WTC11 (cell line): ENCODE measurements at regions of chr3 and their contacts with region 1.

Region 1: GRCh38 chr3:138941259-138941885 is 5.6 kb downstream of the FOXL2 start:
- DNase-seq: peak; percentile 85
- ATAC-seq: peak; percentile 4
- H3K4me3 Mint-ChIP-seq: no peak overlapping the region
- H3K27ac Mint-ChIP-seq: no peak overlapping the region
- H3K4me1 Mint-ChIP-seq: peaks cover 59% of the 10 kb centered on the region
- H3K27me3 Mint-ChIP-seq: peaks cover 98% of the 10 kb centered on the region
- CTCF ChIP-seq: peak; percentile 71

Region 2: GRCh38 chr3:138509586-138509985 is 431.8 kb before region 1 on chr3:
- CTCF ChIA-PET with region 1: no interaction called
- POLR2A ChIA-PET with region 1: no interaction called
- DNase-seq: no peak
- ATAC-seq: no peak
- H3K4me3 Mint-ChIP-seq: no peak overlapping the region
- H3K27ac Mint-ChIP-seq: peak overlapping the region; percentile 10; the same call in 1 of the 2 replicates
- H3K4me1 Mint-ChIP-seq: peaks cover 10% of the 10 kb centered on the region
- H3K27me3 Mint-ChIP-seq: no peaks in the 10 kb centered on the region
- CTCF ChIP-seq: no peak

Region 3: DNA sequence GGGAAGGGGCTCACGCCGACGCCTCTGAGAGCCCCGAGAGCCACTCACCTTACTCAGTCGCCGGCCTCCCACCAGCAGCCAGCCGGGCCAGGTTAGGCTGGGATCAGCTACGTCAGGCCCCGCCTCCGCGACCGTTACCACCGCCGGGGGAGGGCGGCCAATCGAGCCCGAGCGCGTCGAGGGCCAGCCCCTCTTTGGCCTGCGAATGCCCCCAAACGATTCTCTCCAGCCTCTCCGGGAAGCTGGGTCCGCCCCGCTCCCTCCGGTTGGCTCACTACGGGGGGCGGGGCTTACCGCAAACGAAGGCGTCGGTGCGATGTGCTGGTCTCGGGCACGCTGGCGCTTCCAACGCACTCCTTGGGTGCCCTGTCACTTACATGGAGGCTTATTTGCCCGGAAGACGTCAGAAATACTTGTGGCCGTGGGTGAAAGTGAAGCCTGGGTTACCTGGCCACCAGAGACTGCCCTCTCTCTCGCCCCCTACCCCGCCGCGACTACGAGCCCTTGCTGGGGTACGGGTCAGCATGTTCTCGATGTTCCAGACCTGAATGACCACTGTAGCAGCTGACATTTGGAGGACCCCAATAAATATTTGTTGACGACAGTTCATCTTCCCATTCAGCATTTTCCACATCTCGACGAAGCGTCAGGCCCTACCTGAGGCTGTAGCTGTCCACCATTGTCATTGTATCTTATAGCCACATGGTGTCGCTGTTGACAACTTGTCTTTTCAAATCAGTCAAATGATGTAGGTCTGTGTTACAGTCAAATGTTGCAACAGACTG is 347.0 kb before region 1 on chr3 and contains the start of gene CEP70:
- CTCF ChIA-PET with region 1: interaction called, 37 read pairs
- POLR2A ChIA-PET with region 1: interaction called, 3 read pairs
- DNase-seq: peak; percentile 95
- ATAC-seq: peak; percentile 93
- H3K4me3 Mint-ChIP-seq: peak within 1 kb of the TSS; percentile 96
- H3K27ac Mint-ChIP-seq: peak within 1 kb of the TSS; percentile 95
- H3K4me1 Mint-ChIP-seq: peaks cover 21% of the 10 kb centered on the region
- H3K27me3 Mint-ChIP-seq: no peaks in the 10 kb centered on the region
- CTCF ChIP-seq: peak; percentile 86
- total RNA-seq, gene CEP70: 27.2 to 34.8 TPM (median 33.5 TPM) in 3 replicates

Region 4: GRCh38 chr3:138898301-138898700 is 43.1 kb before region 1 on chr3:
- CTCF ChIA-PET with region 1: no interaction called
- POLR2A ChIA-PET with region 1: no interaction called
- DNase-seq: no peak
- ATAC-seq: no peak
- H3K4me3 Mint-ChIP-seq: no peak overlapping the region
- H3K27ac Mint-ChIP-seq: no peak overlapping the region
- H3K4me1 Mint-ChIP-seq: no peaks in the 10 kb centered on the region
- H3K27me3 Mint-ChIP-seq: no peaks in the 10 kb centered on the region; the same call in 1 of the 2 replicates
- CTCF ChIP-seq: no peak

Region 5: GRCh38 chr3:138960417-138960852 is 19.1 kb after region 1 on chr3:
- CTCF ChIA-PET with region 1: interaction called, 54 read pairs
- POLR2A ChIA-PET with region 1: interaction called, 4 read pairs
- DNase-seq: no peak
- ATAC-seq: no peak; the same call in 1 of the 2 replicates
- H3K4me3 Mint-ChIP-seq: peak overlapping the region; percentile 34
- H3K27ac Mint-ChIP-seq: no peak overlapping the region
- H3K4me1 Mint-ChIP-seq: peaks cover 3% of the 10 kb centered on the region; the same call in 1 of the 2 replicates
- H3K27me3 Mint-ChIP-seq: peaks cover 43% of the 10 kb centered on the region
- CTCF ChIP-seq: no peak

Region 6: GRCh38 chr3:138974462-138974861 is 33.1 kb after region 1 on chr3:
- CTCF ChIA-PET with region 1: interaction called, 59 read pairs
- POLR2A ChIA-PET with region 1: interaction called, 7 read pairs
- DNase-seq: no peak
- ATAC-seq: no peak
- H3K4me3 Mint-ChIP-seq: no peak overlapping the region
- H3K27ac Mint-ChIP-seq: no peak overlapping the region
- H3K4me1 Mint-ChIP-seq: no peaks in the 10 kb centered on the region
- H3K27me3 Mint-ChIP-seq: 0 out of 2 replicates have a peak, but pooled peaks cover 6% of the 10 kb centered on the region
- CTCF ChIP-seq: no peak

Region 7: DNA sequence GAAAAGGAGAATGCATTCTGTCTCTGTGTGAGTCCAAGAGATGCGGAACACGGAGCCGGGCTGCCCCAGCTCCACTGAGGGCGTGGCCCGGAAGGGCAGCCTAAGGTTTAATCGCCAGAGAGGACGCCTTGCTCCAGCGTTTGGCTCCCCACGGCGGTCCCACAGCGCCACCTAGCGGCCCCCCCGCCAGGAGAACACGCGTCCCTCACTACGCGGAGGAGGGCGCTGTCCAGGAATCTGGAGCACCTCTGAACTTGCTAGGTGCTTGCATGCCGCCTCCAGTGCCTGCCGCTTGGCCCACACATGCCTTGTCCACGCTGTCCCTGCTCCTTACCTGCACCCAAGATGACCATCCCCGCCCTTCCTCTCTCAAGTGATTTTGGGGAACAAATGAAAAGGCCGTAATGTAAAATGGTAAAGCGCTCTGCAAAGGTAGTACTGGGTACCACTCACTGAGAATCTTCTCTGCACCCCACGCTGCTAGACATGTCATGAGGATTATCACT is 388.0 kb after region 1 on chr3:
- CTCF ChIA-PET with region 1: interaction called, 33 read pairs
- POLR2A ChIA-PET with region 1: no interaction called
- DNase-seq: peak; percentile 96
- ATAC-seq: peak; percentile 97
- H3K4me3 Mint-ChIP-seq: peak overlapping the region; percentile 56
- H3K27ac Mint-ChIP-seq: no peak overlapping the region
- H3K4me1 Mint-ChIP-seq: peaks cover 4% of the 10 kb centered on the region; the same call in 1 of the 2 replicates
- H3K27me3 Mint-ChIP-seq: peaks cover 60% of the 10 kb centered on the region
- CTCF ChIP-seq: peak; percentile 99